Activated T-helper 1 cell treated with anti-CD3 and anti-CD28 coated beads, Interleukin-12 subunit alpha, Interleukin-12 subunit beta, Interleukin-2, Interleukin-4 antibody, amounts not matched to agents 30 ng/mL and 10 ng/mL and 1 ng/mL, durations not matched to agents 14 hours and 24 hours and 36 hours (primary cell): ENCODE measurements at regions of chr12 and their contacts with region 1.

Region 1: GRCh38 chr12:53213348-53213747 is 6.3 kb upstream of the ITGB7 start:
- DNase-seq: peak; percentile 75
- H3K4me3 Mint-ChIP-seq: no peak overlapping the region
- H3K27ac Mint-ChIP-seq: peak overlapping the region; percentile 11
- H3K4me1 Mint-ChIP-seq: peaks cover 78% of the 10 kb centered on the region
- H3K27me3 Mint-ChIP-seq: no peaks in the 10 kb centered on the region

Region 2: DNA sequence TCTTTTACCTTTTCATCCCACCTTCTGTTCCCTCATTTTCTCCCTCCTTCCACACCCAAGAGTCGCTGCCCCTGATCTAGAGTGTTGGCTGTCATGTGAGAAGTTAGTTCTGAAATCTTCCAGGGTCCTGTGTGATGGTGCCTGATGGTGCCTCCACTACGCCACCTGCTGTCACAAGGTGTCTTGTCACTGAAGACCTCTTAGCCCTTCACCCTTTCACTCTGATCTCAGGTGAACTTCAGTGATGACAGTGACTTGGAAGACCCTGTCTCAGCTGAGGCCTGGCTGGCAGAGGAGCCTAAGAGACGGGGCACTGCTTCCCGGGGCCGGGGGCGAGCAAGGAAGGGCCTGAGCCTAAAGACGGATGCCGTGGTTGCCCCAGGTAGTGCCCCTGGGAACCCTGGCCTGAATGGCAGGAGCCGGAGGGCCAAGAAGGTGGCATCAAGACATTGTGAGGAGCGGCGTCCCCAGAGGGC is 74.4 kb after region 1 on chr12:
- intact Hi-C with region 1: loop called (anchors 1 kb)
- DNase-seq: peak; percentile 51
- H3K4me3 Mint-ChIP-seq: no peak overlapping the region
- H3K27ac Mint-ChIP-seq: peak overlapping the region; percentile 60
- H3K4me1 Mint-ChIP-seq: peaks cover 7% of the 10 kb centered on the region
- H3K27me3 Mint-ChIP-seq: no peaks in the 10 kb centered on the region

Region 3: DNA sequence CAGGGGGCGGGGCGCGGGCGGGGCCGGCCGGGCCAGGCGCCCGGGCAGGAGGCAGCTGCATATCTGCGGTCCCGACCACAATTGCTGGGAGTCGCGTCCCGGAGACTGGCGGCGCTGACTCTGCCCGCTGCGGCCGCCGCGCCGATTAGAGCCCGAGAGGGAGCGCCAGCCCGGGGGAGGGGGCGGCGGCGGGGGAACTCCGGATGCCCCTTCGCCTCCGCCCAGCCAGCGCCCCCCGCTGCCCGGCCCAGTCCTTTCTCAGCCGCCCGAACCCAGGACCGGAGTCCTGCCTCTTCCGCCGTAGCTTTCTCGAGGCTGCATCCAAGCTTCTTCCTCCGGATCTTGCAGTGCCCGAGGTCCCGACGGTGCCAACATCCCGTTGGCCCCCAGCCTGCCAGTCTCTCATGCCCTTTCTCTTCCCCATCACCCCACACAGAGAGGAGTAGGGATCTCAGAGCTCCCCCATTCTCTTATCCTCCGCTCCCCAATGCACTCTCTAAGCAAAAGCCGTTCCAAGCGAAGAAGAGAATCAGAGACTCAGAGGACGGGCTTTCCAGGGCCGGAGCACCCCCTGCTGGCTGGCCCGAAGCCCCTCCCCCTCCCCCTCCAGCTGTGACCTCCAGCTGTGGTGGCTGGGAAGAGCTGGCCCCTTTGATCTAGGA is 131.6 kb after region 1 on chr12:
- intact Hi-C with region 1: loop called (anchors 1 kb)
- DNase-seq: peak; percentile 41
- H3K4me3 Mint-ChIP-seq: peak overlapping the region; percentile 99
- H3K27ac Mint-ChIP-seq: peak overlapping the region; percentile 96
- H3K4me1 Mint-ChIP-seq: peaks cover 23% of the 10 kb centered on the region
- H3K27me3 Mint-ChIP-seq: peaks cover 12% of the 10 kb centered on the region